Activated CD4-positive, alpha-beta T cell treated with anti-CD3 and anti-CD28 coated beads for 36 hours (primary cell): ENCODE measurements at regions of chr9 and their contacts with region 1.

Region 1: DNA sequence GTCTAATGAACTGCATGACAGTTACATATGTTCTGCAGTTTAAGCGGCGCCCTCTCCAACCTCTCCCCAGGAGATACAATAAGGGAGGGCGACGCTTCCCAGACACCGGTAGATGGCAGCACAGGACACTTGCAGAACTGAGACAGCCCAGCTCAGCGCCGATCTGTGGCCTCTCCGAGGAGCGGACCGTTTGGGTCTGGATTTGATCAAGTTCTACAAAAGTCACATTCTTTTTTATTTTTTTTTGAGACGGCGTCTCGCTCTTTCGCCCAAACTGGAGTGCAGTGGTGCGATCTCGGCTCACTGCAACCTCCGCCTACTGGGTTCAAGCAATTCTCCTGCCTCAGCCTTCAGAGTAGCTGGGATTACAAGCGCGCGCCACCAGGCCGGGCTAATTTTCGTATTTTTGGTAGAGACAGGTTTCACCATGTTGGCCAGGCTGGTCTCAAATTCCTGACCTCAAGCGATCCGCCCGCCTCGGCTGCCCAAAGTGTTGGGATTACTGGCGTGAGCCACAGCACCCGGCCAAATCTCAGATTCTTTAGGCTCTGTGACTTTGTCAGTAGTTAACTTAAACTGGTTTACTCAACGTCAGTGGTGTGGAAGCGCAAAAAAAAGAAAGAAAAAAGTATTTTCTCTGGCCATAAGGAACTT is 1.4 kb upstream of the ATOSB start:
- DNase-seq: peak; percentile 94
- ATAC-seq: peak; percentile 66
- H3K4me3 Mint-ChIP-seq: peak overlapping the region; percentile 77
- H3K27ac Mint-ChIP-seq: peak overlapping the region; percentile 87
- H3K4me1 Mint-ChIP-seq: peaks cover 44% of the 10 kb centered on the region
- H3K27me3 Mint-ChIP-seq: no peaks in the 10 kb centered on the region

Region 2: DNA sequence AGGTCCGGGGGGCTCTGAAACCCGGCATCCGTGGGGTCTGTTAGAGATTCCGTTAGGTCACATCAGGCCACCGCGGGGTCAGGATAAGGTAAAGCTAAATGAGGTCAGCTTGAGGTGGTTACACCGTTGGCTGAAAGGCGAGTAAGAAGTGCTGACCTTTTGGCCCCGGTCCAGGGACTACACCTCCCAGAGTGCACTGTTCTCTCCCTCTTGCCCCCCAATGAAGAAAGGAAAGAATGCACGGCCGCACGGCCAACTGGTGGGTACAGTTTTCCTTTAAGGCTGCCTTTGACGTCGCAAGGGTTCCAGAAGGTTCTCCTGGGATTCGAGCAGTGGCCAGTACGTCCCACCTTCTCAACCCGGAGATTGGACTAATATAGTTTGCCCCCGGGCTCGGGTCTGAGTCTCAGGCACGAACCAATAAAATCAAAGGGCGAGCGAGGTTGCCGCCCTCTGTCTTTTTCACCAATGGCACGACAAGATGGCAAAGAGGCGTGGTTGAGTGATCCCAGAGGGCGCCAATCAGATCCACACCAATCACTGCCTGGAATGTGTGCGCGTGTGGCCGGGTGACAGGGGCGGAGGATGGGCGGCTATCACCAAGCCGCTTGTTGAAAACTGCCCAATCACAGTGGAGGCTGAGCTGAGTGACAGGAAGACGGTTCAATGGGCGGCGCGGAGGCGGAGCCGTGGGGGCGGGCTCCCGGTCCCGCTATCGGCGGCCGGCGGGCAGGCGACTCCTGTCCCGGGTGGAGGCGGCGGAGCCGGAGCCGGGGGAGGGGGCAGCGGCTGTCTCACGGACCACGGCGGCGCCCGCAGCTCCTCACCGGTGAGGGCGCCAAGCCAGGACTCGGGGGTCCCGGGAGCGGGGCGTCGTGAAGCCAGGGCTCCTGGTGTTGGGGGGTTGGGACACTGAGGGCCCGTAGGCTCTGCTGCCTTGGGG is 127.8 kb before region 1 on chr9 and contains the start of gene DNAJB5:
- CTCF ChIA-PET with region 1: no interaction called
- POLR2A ChIA-PET with region 1: no interaction called
- intact Hi-C with region 1: loop called in 1 of 2 experiments (anchors 1 kb)
- DNase-seq: peak; percentile 98
- ATAC-seq: peak; percentile 88
- H3K4me3 Mint-ChIP-seq: peak within 1 kb of the TSS; percentile 78
- H3K27ac Mint-ChIP-seq: peak within 1 kb of the TSS; percentile 94
- H3K4me1 Mint-ChIP-seq: peaks cover 82% of the 10 kb centered on the region
- H3K27me3 Mint-ChIP-seq: no peaks in the 10 kb centered on the region
- total RNA-seq, gene DNAJB5: 10.3 to 11.3 TPM

Region 3: GRCh38 chr9:35102926-35103659 is 13.9 kb before region 1 on chr9 and contains the start of gene STOML2:
- CTCF ChIA-PET with region 1: interaction called, 7 read pairs
- POLR2A ChIA-PET with region 1: interaction called, 18 read pairs
- intact Hi-C with region 1: loop called (anchors 1 kb)
- DNase-seq: peak; percentile 95
- ATAC-seq: peak; percentile 99
- H3K4me3 Mint-ChIP-seq: peak within 1 kb of the TSS; percentile 98
- H3K27ac Mint-ChIP-seq: peak within 1 kb of the TSS; percentile 98
- H3K4me1 Mint-ChIP-seq: peaks cover 25% of the 10 kb centered on the region
- H3K27me3 Mint-ChIP-seq: no peaks in the 10 kb centered on the region
- total RNA-seq, gene STOML2: 169 to 201 TPM

Region 4: GRCh38 chr9:35414889-35415288 is 297.9 kb after region 1 on chr9:
- CTCF ChIA-PET with region 1: no interaction called
- POLR2A ChIA-PET with region 1: no interaction called
- intact Hi-C with region 1: loop called in 1 of 2 experiments (anchors 5 kb)
- DNase-seq: no peak
- ATAC-seq: no peak
- H3K4me3 Mint-ChIP-seq: no peak overlapping the region
- H3K27ac Mint-ChIP-seq: no peak overlapping the region
- H3K4me1 Mint-ChIP-seq: no peaks in the 10 kb centered on the region
- H3K27me3 Mint-ChIP-seq: peaks cover 25% of the 10 kb centered on the region

Region 5: GRCh38 chr9:35603987-35604577 is 487.1 kb after region 1 on chr9:
- CTCF ChIA-PET with region 1: no interaction called
- POLR2A ChIA-PET with region 1: no interaction called
- intact Hi-C with region 1: loop called (anchors 1 to 5 kb)
- DNase-seq: peak; percentile 100
- ATAC-seq: peak; percentile 93
- H3K4me3 Mint-ChIP-seq: peak overlapping the region; percentile 83
- H3K27ac Mint-ChIP-seq: peak overlapping the region; percentile 96
- H3K4me1 Mint-ChIP-seq: peaks cover 23% of the 10 kb centered on the region
- H3K27me3 Mint-ChIP-seq: no peaks in the 10 kb centered on the region